GM23248 (cell line): ENCODE measurements at regions of chr2 and their contacts with region 1.

Region 1: GRCh38 chr2:106104332-106105062 is 89.6 kb downstream of the UXS1 start:
- DNase-seq: peak; percentile 70
- H3K4me3 ChIP-seq: no peak overlapping the region
- H3K27ac ChIP-seq: no peak overlapping the region
- H3K4me1 ChIP-seq: peaks cover 5% of the 10 kb centered on the region; the same call in 1 of the 2 replicates
- H3K27me3 ChIP-seq: no peaks in the 10 kb centered on the region

Region 2: DNA sequence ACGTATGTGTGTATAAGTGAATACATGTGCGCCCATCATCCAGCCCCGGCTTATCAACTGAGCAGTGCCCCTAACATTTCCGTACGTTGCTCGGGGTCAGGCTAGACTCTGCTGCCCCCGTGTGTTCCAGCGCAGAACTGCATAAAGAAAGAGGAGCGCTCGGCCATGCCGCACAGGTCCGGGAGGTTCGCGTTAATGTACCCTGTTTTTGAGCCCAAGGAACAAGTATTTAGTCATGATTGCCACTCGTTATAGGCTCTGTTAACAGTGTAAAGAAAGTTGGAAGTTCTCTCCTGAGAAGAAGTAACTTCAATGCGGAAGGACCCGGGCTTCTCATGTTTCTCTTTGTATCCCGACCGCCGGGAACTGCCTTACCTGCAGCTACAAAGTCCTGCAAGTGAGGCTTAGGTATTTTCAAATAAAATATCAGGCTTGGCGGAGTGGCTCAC is 438.3 kb after region 1 on chr2:
- in situ Hi-C with region 1: loop called (anchors 25 kb)
- DNase-seq: peak; percentile 50
- H3K4me3 ChIP-seq: no peak overlapping the region
- H3K27ac ChIP-seq: no peak overlapping the region
- H3K4me1 ChIP-seq: no peaks in the 10 kb centered on the region
- H3K27me3 ChIP-seq: peaks cover 28% of the 10 kb centered on the region; the same call in 1 of the 2 replicates